Activated CD4-positive, alpha-beta memory T cell treated with anti-CD3 and anti-CD28 coated beads for 36 hours (primary cell): ENCODE measurements at regions of chr1 and their contacts with region 1.

Region 1: DNA sequence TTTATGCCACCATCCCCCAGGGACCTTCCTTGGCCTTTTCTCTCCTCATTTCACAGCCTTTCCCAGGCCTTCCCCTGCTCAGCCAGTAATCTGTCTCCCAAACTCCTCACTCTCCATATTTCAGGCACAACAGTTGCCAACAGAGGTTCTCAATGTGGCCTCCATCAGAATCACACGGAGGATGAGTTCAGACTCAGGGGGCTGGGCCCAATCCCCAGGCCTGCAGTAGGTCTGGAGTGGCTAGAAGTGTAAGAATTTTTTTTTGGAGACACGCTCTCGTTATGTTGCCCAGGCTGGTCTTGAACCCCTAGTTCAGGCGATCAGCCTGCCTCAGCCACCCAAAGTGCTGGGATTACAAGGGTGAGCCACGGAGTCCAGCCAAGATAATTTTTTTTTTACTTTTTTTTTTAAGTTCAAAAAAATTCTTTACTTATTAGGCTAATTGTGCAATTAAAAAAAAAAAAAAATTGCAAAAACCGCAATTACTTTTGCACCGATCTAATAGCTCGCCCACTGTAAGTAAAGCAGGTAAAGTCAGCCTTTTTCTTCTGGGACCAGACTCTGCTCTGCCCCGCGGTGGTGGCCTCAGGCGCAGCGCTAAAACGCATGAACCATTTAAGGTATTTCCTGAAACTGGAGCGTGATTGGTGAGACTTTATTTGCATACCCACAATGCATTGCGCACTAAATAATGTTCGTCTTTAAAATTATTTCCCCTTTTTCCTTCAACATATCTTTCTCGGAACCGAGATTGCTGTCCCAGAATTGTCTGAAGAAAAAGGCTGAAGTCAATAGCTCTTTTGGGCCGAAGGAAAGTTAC is 18.7 kb downstream of the KIAA2013 start:
- DNase-seq: peak; percentile 95
- H3K4me3 Mint-ChIP-seq: peak overlapping the region; percentile 92
- H3K27ac Mint-ChIP-seq: peak overlapping the region; percentile 99
- H3K4me1 Mint-ChIP-seq: peaks cover 37% of the 10 kb centered on the region
- H3K27me3 Mint-ChIP-seq: peaks cover 16% of the 10 kb centered on the region

Region 2: DNA sequence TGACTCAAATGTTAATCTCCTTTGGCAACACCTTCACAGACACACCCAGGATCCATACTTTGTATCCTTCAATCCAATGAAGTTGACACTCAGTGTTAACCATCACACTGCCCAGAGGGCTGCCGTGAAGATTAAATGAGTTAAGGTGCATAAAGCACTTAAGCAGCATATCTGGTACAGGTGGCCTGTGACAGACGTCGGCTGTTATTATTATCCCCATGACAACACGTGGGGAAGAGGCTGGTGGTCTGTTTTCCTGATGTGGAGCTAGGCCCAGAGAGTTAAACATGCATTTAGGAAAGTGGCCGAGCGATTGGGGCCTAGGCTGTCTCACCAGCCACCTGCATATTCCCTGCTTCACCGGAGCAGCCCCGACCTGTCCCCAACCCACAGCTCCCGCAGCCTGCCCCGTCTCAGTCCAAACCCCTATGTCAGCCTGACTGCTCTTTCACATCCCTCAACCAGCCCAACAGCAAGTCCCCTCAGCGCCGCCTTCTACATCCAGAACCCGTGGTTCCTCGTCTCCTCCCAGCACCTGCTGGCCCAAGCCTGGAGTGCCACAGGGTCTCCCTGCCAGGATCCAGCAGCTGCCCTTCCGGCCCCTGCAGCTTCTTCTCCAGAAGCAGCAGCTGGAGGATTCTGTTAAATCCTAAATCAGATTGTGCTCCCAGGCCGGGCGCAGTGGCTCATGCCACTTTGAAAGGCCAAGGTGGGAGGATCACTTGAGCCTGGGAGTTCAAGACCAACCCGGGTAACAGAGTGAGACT is 331.2 kb before region 1 on chr1:
- CTCF ChIA-PET with region 1: no interaction called
- POLR2A ChIA-PET with region 1: no interaction called
- intact Hi-C with region 1: no loop called
- DNase-seq: no peak
- H3K4me3 Mint-ChIP-seq: no peak overlapping the region
- H3K27ac Mint-ChIP-seq: no peak overlapping the region
- H3K4me1 Mint-ChIP-seq: no peaks in the 10 kb centered on the region
- H3K27me3 Mint-ChIP-seq: peaks cover 11% of the 10 kb centered on the region

Region 3: DNA sequence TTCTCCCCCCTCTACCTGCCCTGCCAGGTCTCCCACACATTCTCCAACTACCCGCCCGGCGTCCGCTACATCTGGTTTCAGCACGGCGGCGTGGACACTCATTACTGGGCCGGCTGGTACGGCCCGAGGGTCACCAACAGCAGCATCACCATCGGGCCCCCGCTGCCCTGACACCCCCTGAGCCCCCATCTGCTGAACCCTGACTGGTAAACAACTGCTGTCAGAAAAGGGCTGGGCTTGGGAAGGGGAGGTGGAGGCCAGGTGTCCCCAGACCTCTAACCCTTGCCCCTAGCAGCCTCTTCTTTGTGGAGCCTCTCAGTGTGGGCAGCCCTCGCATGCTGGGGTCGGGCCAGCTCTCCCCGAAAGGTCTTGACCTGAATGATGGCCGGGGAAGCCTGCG is 246.4 kb before region 1 on chr1:
- CTCF ChIA-PET with region 1: no interaction called
- POLR2A ChIA-PET with region 1: interaction called, 10 read pairs
- intact Hi-C with region 1: no loop called
- DNase-seq: no peak
- H3K4me3 Mint-ChIP-seq: no peak overlapping the region
- H3K27ac Mint-ChIP-seq: no peak overlapping the region
- H3K4me1 Mint-ChIP-seq: no peaks in the 10 kb centered on the region
- H3K27me3 Mint-ChIP-seq: no peaks in the 10 kb centered on the region

Region 4: GRCh38 chr1:11778844-11779623 is 128.5 kb before region 1 on chr1:
- CTCF ChIA-PET with region 1: no interaction called
- POLR2A ChIA-PET with region 1: no interaction called
- intact Hi-C with region 1: no loop called
- DNase-seq: no peak
- H3K4me3 Mint-ChIP-seq: no peak overlapping the region
- H3K27ac Mint-ChIP-seq: no peak overlapping the region
- H3K4me1 Mint-ChIP-seq: no peaks in the 10 kb centered on the region
- H3K27me3 Mint-ChIP-seq: no peaks in the 10 kb centered on the region

Region 5: DNA sequence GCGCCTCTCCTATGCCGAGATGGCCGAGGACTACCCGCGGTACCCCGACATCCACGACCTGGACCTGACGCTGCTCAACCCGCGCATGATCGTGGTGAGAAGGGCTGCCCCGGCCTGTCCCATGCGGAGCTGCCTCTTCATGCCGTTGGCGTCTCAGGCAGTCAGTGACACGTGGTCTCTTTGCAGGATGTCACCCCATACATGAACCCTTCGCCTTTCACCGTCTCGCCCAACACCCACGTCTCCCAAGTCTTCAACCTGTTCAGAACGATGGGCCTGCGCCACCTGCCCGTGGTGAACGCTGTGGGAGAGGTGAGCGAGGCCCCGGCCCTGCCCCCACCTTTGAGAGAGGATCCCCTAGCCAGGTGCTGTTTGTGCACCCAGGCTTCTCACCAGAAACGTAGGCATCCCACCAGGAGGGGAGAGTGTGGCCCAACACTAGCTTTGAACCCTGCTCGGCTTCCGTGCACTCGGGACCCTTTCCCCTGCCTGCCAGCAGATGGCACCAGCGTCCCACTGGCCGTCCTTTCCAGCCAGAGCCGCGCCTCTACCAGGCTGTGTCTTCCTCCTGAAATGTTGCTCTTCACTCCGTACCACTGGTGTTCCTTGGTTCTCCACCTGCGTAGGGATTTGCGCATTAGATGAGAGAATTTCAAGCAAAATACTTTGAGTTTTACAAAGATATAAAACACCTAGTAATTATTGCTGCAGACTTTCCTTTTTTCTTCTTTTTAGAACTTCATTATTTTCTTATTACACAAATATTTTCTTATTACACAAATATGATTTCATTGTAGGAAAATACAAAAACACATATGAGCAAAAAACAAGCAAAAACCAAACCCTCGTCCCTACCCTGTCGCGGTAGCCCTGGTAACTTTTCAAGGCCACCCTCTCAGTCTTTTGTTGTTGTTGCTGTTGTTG is 68.9 kb before region 1 on chr1:
- CTCF ChIA-PET with region 1: interaction called, 11 read pairs
- POLR2A ChIA-PET with region 1: interaction called, 19 read pairs
- intact Hi-C with region 1: loop called (anchors 1 kb)
- DNase-seq: peak; percentile 81
- H3K4me3 Mint-ChIP-seq: no peak overlapping the region
- H3K27ac Mint-ChIP-seq: no peak overlapping the region
- H3K4me1 Mint-ChIP-seq: no peaks in the 10 kb centered on the region
- H3K27me3 Mint-ChIP-seq: no peaks in the 10 kb centered on the region

Region 6: DNA sequence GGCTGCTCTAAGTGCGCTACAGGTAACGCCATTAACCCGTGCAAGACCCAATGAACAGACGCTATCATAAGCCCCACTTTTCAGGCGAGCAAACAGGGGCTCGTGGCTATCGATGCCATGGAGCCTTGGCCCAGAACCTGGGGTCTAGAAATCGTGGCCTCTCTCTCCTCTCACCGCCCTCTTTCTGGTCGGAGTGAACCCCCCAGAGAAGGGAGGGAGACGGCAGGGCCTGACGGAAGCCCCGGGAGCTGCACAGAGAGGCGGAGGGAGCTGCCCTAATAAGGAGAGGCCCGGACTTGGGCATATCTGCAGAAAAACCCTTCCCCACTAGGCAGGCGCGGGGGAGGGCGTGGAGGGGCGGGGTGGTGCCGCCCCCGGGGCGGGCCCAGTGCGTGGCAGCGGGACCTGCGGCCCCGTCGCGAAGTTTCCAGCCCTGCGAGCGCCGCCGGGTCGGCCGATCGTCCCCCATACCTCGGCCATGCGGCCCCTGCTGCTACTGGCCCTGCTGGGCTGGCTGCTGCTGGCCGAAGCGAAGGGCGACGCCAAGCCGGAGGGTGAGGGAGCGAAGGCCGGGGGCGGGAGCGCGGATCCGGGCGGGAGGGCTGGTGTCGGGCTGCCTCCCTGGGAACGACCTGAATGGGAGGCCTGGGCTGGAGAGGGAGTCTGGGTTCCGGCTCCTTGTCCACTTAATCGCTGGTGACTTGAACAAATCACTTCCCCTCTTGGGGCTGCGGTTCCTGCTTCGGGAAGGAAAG is 27.0 kb after region 1 on chr1 and contains the start of gene PLOD1:
- CTCF ChIA-PET with region 1: interaction called, 4 read pairs
- POLR2A ChIA-PET with region 1: interaction called, 174 read pairs
- intact Hi-C with region 1: no loop called
- DNase-seq: peak; percentile 90
- H3K4me3 Mint-ChIP-seq: peak within 1 kb of the TSS; percentile 76
- H3K27ac Mint-ChIP-seq: no peak within 1 kb of the TSS
- H3K4me1 Mint-ChIP-seq: no peaks in the 10 kb centered on the region
- H3K27me3 Mint-ChIP-seq: no peaks in the 10 kb centered on the region
- total RNA-seq, gene PLOD1: 11.0 to 13.5 TPM

Region 7: GRCh38 chr1:12031039-12031980 is 123.8 kb after region 1 on chr1:
- CTCF ChIA-PET with region 1: no interaction called
- POLR2A ChIA-PET with region 1: interaction called, 31 read pairs
- intact Hi-C with region 1: no loop called
- DNase-seq: peak; percentile 65
- H3K4me3 Mint-ChIP-seq: no peak overlapping the region
- H3K27ac Mint-ChIP-seq: no peak overlapping the region
- H3K4me1 Mint-ChIP-seq: no peaks in the 10 kb centered on the region
- H3K27me3 Mint-ChIP-seq: no peaks in the 10 kb centered on the region

Region 8: GRCh38 chr1:12067900-12068821 is 160.7 kb after region 1 on chr1:
- CTCF ChIA-PET with region 1: no interaction called
- POLR2A ChIA-PET with region 1: interaction called, 45 read pairs
- intact Hi-C with region 1: no loop called
- DNase-seq: peak; percentile 89
- H3K4me3 Mint-ChIP-seq: peak overlapping the region; percentile 69
- H3K27ac Mint-ChIP-seq: peak overlapping the region; percentile 96
- H3K4me1 Mint-ChIP-seq: peaks cover 62% of the 10 kb centered on the region
- H3K27me3 Mint-ChIP-seq: peaks cover 32% of the 10 kb centered on the region

Region 9: GRCh38 chr1:12177999-12178441 is 270.5 kb after region 1 on chr1:
- CTCF ChIA-PET with region 1: no interaction called
- POLR2A ChIA-PET with region 1: interaction called, 18 read pairs
- intact Hi-C with region 1: loop called (anchors 5 kb)
- DNase-seq: peak; percentile 97
- H3K4me3 Mint-ChIP-seq: peak overlapping the region; percentile 54
- H3K27ac Mint-ChIP-seq: peak overlapping the region; percentile 94
- H3K4me1 Mint-ChIP-seq: peaks cover 94% of the 10 kb centered on the region
- H3K27me3 Mint-ChIP-seq: no peaks in the 10 kb centered on the region